Transverse colon (tissue), 4 donors: ENCODE measurements at regions of chr14 and their contacts with region 1.

Region 1: GRCh38 chr14:22556990-22557623 is 31.9 kb downstream of the DAD1 start:
- DNase-seq: peak; percentile 89
- H3K4me3 ChIP-seq: peak overlapping the region in 1 of 4 donors; percentile 47
- H3K27ac ChIP-seq: peak overlapping the region; percentile 71 to 85 (median 74)
- H3K4me1 ChIP-seq: peaks cover 21 to 59% (median 41%) of the 10 kb centered on the region in 4 donors
- H3K27me3 ChIP-seq: no peaks in the 10 kb centered on the region
- CTCF ChIP-seq: peak; percentile 98 to 100 (median 99)
- EP300 ChIP-seq: no peak
- POLR2A ChIP-seq: no peak

Region 2: DNA sequence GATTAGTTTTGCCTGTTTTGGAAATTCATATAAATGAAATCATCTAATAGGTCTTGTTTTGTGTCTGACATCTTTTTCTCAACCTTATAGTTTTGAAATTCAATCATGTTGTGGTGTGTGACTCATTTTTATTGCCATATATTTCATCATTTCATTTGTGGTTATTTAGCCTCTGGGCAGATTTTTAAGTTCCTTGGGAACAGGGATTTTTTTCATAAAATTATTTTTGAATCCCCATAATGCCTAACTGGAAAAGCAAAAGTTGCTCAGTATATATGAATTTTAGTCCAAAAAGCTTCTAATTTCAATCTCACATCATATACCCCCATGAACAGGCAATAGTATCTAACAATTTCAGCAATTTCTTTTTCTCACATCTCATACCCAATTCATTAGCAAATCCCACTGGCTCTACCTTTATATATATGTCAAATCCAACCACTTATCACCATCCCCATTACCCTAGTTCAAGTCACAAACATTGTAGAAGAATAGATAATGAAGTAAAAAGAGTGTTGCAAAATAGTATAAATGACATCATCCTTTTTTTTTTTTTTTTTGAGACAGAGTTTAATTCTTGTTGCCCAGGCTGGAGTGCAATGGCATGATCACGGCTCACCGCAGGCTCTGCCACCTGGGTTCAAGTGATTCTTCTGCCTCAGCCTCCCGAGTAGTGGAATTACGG is 89.6 kb after region 1 on chr14:
- in situ Hi-C with region 1: loop called in 1 of 4 experiments (anchors 10 kb)
- intact Hi-C with region 1: loop called (anchors 5 kb)
- DNase-seq: no peak
- H3K4me3 ChIP-seq: no peak overlapping the region
- H3K27ac ChIP-seq: no peak overlapping the region
- H3K4me1 ChIP-seq: no peaks in the 10 kb centered on the region
- H3K27me3 ChIP-seq: no peaks in the 10 kb centered on the region
- CTCF ChIP-seq: no peak
- EP300 ChIP-seq: no peak
- POLR2A ChIP-seq: no peak

Region 3: DNA sequence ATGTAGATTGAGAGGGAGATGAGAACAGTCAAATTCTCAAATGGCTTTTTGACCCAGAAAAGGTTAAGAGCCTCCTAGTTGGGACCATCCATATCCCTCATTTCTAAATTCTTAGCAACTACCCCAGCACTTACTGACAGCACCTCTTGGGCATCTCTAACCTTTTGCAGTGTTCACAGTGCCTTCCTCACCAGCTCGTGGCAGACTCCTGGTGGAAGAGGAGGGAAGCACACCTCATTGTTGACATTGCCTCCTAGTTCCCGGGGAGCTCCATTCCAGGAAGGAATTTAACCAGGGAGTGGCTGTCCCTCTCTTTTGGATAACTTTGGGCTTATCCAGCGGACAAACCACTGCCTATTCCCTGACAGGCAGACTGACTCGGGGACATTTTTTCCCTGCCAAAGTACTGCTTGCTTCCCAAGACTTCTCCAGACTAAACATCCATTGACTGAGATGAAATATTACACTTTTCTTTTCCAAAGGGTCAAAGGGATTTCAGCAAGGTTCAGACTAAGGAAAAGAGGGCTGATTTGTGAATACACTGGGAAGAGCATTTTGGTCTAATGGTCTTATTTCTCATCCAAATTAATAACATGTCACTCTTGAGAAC is 96.0 kb after region 1 on chr14:
- in situ Hi-C with region 1: loop called in 1 of 4 experiments (anchors 10 kb)
- intact Hi-C with region 1: loop called (anchors 5 kb)
- DNase-seq: peak; percentile 72
- H3K4me3 ChIP-seq: no peak overlapping the region
- H3K27ac ChIP-seq: no peak overlapping the region
- H3K4me1 ChIP-seq: peaks cover 0 to 12% (median 2%) of the 10 kb centered on the region in 4 donors
- H3K27me3 ChIP-seq: no peaks in the 10 kb centered on the region
- CTCF ChIP-seq: peak; percentile 72 to 87 (median 82)
- EP300 ChIP-seq: no peak
- POLR2A ChIP-seq: no peak

Region 4: GRCh38 chr14:22829661-22830442 is 272.7 kb after region 1 on chr14 and contains the start of gene MRPL52:
- in situ Hi-C with region 1: no loop called
- intact Hi-C with region 1: loop called (anchors 10 kb)
- DNase-seq: peak; percentile 93
- H3K4me3 ChIP-seq: peak within 1 kb of the TSS; percentile 62 to 81 (median 74)
- H3K27ac ChIP-seq: peak within 1 kb of the TSS; percentile 80 to 87 (median 82)
- H3K4me1 ChIP-seq: peaks cover 6 to 17% (median 7%) of the 10 kb centered on the region in 4 donors
- H3K27me3 ChIP-seq: no peaks in the 10 kb centered on the region
- CTCF ChIP-seq: no peak
- EP300 ChIP-seq: no peak
- POLR2A ChIP-seq: peak; percentile 45
- total RNA-seq, gene MRPL52: 7.5 to 44.3 (median 23.8) TPM in 3 of 4 donors, not detected in the other

Region 5: GRCh38 chr14:22852940-22853767 is 296.0 kb after region 1 on chr14:
- in situ Hi-C with region 1: loop called in 3 of 4 experiments (anchors 10 to 25 kb)
- intact Hi-C with region 1: loop called (anchors 10 kb)
- DNase-seq: peak; percentile 96
- H3K4me3 ChIP-seq: peak overlapping the region in 3 of 4 donors; percentile 28 to 48 (median 32)
- H3K27ac ChIP-seq: peak overlapping the region; percentile 73 to 83 (median 76)
- H3K4me1 ChIP-seq: peaks cover 22 to 50% (median 36%) of the 10 kb centered on the region in 4 donors
- H3K27me3 ChIP-seq: no peaks in the 10 kb centered on the region
- CTCF ChIP-seq: peak; percentile 86 to 100 (median 95)
- EP300 ChIP-seq: no peak
- POLR2A ChIP-seq: no peak